Activated CD4-positive, alpha-beta memory T cell treated with anti-CD3 and anti-CD28 coated beads for 36 hours (primary cell): ENCODE measurements at regions of chr17 and their contacts with region 1.

Region 1: GRCh38 chr17:27601069-27601975 is 29.7 kb upstream of the LGALS9 start:
- DNase-seq: peak; percentile 86
- H3K4me3 Mint-ChIP-seq: no peak overlapping the region
- H3K27ac Mint-ChIP-seq: no peak overlapping the region
- H3K4me1 Mint-ChIP-seq: peaks cover 4% of the 10 kb centered on the region
- H3K27me3 Mint-ChIP-seq: no peaks in the 10 kb centered on the region

Region 2: DNA sequence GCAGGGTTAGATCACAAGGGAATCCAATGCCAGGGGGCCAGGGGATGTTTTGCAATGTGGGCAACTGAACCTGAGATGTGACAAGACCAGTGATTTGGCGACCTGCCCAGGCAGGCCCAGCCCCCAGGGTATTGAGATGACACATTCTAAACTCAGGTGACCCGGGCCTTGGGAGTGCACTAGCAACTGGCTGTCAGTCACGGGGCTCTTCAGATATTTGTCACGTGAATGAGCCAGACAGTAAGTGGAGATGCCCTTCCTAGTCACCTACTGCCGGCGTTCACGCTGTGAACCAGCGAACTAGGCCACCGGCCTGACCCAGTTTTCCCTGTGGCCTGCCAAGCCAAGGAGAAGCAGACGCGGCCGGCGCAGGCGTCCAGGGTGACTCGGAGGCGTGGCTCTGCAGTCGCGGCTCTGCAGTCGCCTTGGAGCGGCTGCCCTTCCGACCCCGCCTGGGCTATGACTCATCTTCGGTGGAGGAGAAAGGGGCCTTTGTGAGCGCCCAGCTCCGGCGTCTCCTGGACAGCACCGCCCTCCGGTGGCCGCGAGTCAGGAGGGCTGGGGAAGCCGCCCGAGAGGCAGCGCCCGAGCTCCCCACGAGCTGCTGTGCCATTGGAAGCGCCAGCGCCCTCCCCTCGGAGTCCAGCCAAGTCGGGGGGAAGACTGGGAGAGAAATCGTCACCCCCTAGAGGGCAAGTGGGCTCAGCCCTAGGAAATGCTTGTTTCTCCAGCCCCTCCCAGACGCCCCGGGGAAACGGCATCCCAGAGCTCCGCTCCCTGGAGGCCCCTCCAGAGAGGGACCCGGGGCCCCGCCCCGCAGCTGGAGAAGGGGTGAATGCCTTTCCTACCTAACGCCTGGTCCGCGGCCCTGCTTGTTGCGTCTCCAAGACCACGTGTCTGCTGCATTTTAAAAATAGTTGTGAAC is 268.6 kb before region 1 on chr17:
- CTCF ChIA-PET with region 1: interaction called, 22 read pairs
- POLR2A ChIA-PET with region 1: no interaction called
- intact Hi-C with region 1: no loop called
- DNase-seq: peak; percentile 95
- H3K4me3 Mint-ChIP-seq: peak overlapping the region; percentile 72
- H3K27ac Mint-ChIP-seq: peak overlapping the region; percentile 88
- H3K4me1 Mint-ChIP-seq: peaks cover 23% of the 10 kb centered on the region
- H3K27me3 Mint-ChIP-seq: no peaks in the 10 kb centered on the region

Region 3: DNA sequence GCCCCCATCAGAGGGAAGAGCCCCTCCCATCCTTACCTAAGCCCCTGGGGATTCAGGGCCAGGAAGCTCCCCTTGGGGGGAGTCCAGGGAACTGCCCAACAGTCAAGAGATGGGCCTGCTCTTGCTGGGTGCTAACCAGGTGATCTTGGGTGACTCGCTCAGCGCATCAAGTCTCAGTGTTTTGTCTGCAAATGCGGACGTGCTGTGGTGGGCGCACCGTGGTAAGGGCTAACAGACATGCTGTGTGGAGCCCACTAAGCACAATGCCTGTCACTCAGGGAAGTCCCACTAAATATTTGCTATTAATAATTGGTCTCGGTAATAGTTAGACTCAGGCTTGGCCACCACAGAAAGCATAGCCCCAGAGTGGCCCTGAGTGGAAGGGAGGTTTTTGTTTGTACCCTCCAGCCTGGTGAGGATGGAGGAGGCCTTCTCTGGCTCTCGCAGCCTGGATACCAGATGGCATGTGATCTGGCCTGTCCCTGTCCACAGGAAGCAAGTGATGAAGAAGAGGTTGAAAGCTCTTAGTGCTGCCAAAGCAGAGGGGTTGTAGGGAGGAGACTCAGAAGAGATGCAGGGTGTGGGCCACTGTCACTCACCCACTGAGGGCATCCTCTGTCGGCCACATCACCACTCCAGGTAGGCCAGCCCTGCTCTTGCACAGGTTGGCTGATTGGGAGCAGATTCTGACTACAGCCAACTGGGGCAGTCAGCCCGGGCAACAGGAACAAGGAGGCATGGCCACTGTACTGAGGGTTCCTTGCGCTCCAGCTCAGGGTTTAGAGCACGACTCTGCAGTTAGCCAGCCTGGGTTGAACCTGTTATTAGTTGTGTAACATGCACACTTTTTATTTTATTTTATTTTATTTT is 214.9 kb before region 1 on chr17:
- CTCF ChIA-PET with region 1: interaction called, 187 read pairs
- POLR2A ChIA-PET with region 1: no interaction called
- intact Hi-C with region 1: loop called (anchors 1 kb)
- DNase-seq: no peak
- H3K4me3 Mint-ChIP-seq: no peak overlapping the region
- H3K27ac Mint-ChIP-seq: no peak overlapping the region
- H3K4me1 Mint-ChIP-seq: peaks cover 2% of the 10 kb centered on the region
- H3K27me3 Mint-ChIP-seq: peaks cover 4% of the 10 kb centered on the region

Region 4: GRCh38 chr17:27473748-27474609 is 127.3 kb before region 1 on chr17:
- CTCF ChIA-PET with region 1: interaction called, 42 read pairs
- POLR2A ChIA-PET with region 1: no interaction called
- intact Hi-C with region 1: no loop called
- DNase-seq: peak; percentile 93
- H3K4me3 Mint-ChIP-seq: peak overlapping the region; percentile 42
- H3K27ac Mint-ChIP-seq: peak overlapping the region; percentile 98
- H3K4me1 Mint-ChIP-seq: peaks cover 94% of the 10 kb centered on the region
- H3K27me3 Mint-ChIP-seq: no peaks in the 10 kb centered on the region

Region 5: GRCh38 chr17:27544350-27545131 is 56.8 kb before region 1 on chr17:
- CTCF ChIA-PET with region 1: interaction called, 13 read pairs
- POLR2A ChIA-PET with region 1: no interaction called
- intact Hi-C with region 1: loop called (anchors 2 kb)
- DNase-seq: peak; percentile 92
- H3K4me3 Mint-ChIP-seq: peak overlapping the region; percentile 64
- H3K27ac Mint-ChIP-seq: peak overlapping the region; percentile 90
- H3K4me1 Mint-ChIP-seq: peaks cover 78% of the 10 kb centered on the region
- H3K27me3 Mint-ChIP-seq: peaks cover 2% of the 10 kb centered on the region

Region 6: DNA sequence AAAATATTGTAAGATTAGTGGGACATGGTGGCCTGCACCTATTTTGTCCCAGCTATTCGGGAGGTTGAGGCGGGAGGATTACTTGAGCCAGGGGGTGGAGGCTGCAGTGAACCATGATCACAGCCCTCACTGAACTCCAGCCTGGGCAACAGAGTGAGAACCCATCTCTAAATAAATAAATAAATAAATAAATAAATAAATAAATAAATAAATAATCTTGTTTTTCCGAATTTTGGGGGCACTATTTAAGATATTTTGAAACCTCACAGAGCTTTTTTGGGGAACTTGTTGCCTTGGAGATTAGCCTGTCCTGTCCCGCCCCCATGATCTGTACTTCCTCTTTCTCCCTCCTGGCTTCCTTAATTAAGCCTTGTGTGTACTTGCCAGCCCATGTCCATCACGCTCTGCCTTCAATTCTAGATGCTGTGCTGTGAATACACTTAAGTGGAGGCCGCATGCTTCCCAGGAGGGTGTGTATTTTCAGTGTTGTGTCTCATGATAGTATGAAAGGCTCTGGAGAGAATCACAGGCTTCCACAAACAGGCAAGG is 34.0 kb after region 1 on chr17:
- CTCF ChIA-PET with region 1: interaction called, 14 read pairs
- POLR2A ChIA-PET with region 1: no interaction called
- intact Hi-C with region 1: no loop called
- DNase-seq: no peak
- H3K4me3 Mint-ChIP-seq: no peak overlapping the region
- H3K27ac Mint-ChIP-seq: no peak overlapping the region
- H3K4me1 Mint-ChIP-seq: peaks cover 25% of the 10 kb centered on the region
- H3K27me3 Mint-ChIP-seq: no peaks in the 10 kb centered on the region

Region 7: GRCh38 chr17:27824745-27825144 is 223.4 kb after region 1 on chr17:
- CTCF ChIA-PET with region 1: no interaction called
- POLR2A ChIA-PET with region 1: no interaction called
- intact Hi-C with region 1: no loop called
- DNase-seq: no peak
- H3K4me3 Mint-ChIP-seq: no peak overlapping the region
- H3K27ac Mint-ChIP-seq: no peak overlapping the region
- H3K4me1 Mint-ChIP-seq: no peaks in the 10 kb centered on the region
- H3K27me3 Mint-ChIP-seq: peaks cover 4% of the 10 kb centered on the region